ENCODE measurements at regions of chr2 and their contacts with region 1.

Region 1: GRCh38 chr2:238060542-238061314 is at the start of gene SCLY:
- DNase-seq: peak; percentile 99
- ATAC-seq: peak; percentile 97
- H3K4me3 Mint-ChIP-seq: peak within 1 kb of the TSS; percentile 80
- H3K27ac Mint-ChIP-seq: peak within 1 kb of the TSS; percentile 96
- H3K4me1 Mint-ChIP-seq: peaks cover 49% of the 10 kb centered on the region
- H3K27me3 Mint-ChIP-seq: peaks cover 10% of the 10 kb centered on the region
- total RNA-seq, gene SCLY: 59.2 to 60.5 TPM

Region 2: GRCh38 chr2:237441605-237442274 is 619.0 kb before region 1 on chr2:
- CTCF ChIA-PET with region 1: no interaction called
- POLR2A ChIA-PET with region 1: no interaction called
- intact Hi-C with region 1: loop called in 1 of 2 experiments (anchors 2 kb)
- DNase-seq: peak; percentile 69
- ATAC-seq: peak; percentile 71
- H3K4me3 Mint-ChIP-seq: peak overlapping the region; percentile 50
- H3K27ac Mint-ChIP-seq: peak overlapping the region; percentile 96
- H3K4me1 Mint-ChIP-seq: peaks cover 82% of the 10 kb centered on the region
- H3K27me3 Mint-ChIP-seq: no peaks in the 10 kb centered on the region

Region 3: GRCh38 chr2:238024986-238025385 is 35.7 kb before region 1 on chr2:
- CTCF ChIA-PET with region 1: interaction called, 3 read pairs
- POLR2A ChIA-PET with region 1: no interaction called
- intact Hi-C with region 1: loop called in 1 of 2 experiments (anchors 2 kb)
- DNase-seq: peak; percentile 77
- ATAC-seq: peak; percentile 100
- H3K4me3 Mint-ChIP-seq: peak overlapping the region; percentile 32
- H3K27ac Mint-ChIP-seq: peak overlapping the region; percentile 84
- H3K4me1 Mint-ChIP-seq: peaks cover 20% of the 10 kb centered on the region
- H3K27me3 Mint-ChIP-seq: no peaks in the 10 kb centered on the region

Region 4: DNA sequence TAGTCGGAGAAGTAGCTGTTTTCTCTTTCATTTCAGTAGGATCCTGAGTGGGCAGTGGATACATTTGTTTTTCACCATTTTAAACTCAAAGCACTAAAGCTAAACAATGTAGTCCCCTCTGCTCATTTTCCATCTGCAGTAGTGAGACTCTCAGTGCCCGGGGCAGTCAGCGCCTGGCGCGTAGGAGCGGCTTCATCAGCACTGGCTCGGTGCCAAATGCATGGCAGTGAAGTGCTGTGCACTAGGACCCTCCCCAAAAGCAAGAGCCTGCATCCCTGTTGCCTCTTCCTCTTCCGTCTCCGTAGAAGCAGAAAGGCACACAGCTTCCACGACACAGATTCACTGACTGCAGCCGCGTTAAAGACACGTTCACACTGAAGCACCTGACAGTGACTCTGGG is 20.4 kb after region 1 on chr2:
- CTCF ChIA-PET with region 1: no interaction called
- POLR2A ChIA-PET with region 1: no interaction called
- intact Hi-C with region 1: no loop called
- DNase-seq: no peak
- ATAC-seq: no peak
- H3K4me3 Mint-ChIP-seq: no peak overlapping the region
- H3K27ac Mint-ChIP-seq: no peak overlapping the region
- H3K4me1 Mint-ChIP-seq: no peaks in the 10 kb centered on the region
- H3K27me3 Mint-ChIP-seq: no peaks in the 10 kb centered on the region

Region 5: GRCh38 chr2:238097998-238098871 is 37.5 kb after region 1 on chr2:
- CTCF ChIA-PET with region 1: no interaction called
- POLR2A ChIA-PET with region 1: no interaction called
- intact Hi-C with region 1: no loop called
- DNase-seq: no peak
- ATAC-seq: peak; percentile 24
- H3K4me3 Mint-ChIP-seq: no peak overlapping the region
- H3K27ac Mint-ChIP-seq: no peak overlapping the region
- H3K4me1 Mint-ChIP-seq: no peaks in the 10 kb centered on the region
- H3K27me3 Mint-ChIP-seq: no peaks in the 10 kb centered on the region

Region 6: DNA sequence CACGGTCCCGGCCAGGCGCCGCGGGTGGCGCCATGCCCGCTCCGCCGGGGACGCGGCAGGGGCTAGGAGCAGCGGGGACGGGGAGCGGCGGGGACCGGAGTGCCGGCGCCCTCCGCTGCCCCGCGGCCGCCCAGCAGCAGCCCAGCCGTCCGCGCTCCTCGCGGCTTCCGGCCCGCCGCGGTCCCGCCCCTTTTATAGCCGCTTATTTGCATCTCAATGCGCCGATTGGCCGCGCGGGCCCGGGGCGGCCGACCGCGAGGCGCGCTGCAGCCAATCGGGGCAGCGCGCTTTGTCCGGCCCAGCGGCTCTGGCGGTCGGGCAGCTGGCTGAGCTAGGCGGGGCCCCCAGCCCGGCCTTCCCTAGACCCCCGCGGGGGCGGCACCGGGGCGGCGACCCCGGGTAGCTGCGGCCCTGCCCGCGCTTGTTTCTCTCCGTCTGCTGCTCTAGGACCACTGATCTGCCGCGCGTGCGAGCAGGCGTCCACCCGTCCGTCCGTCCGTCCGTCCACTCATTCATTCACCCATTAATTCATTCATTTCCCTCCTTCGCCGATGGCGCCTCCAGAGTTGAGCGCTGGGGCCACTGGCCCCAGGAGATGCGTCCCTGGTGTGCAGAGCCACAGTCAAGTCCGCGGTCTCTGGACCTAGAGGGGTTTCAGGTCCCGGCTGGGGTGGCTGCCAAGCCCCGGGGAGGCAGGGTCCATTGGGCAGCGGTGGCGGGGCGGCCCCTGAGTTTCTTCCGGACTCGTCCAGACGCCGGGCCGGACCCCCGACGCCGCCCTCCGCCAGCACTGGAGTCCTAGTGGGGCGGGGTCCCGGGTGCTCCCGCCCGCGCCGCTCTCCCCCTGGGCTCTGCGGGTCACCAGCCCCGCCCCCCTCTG is 179.4 kb after region 1 on chr2 and contains the start of gene HES6:
- CTCF ChIA-PET with region 1: no interaction called
- POLR2A ChIA-PET with region 1: no interaction called
- intact Hi-C with region 1: loop called in 1 of 2 experiments (anchors 2 kb)
- DNase-seq: peak; percentile 87
- ATAC-seq: peak; percentile 86
- H3K4me3 Mint-ChIP-seq: peak within 1 kb of the TSS; percentile 77
- H3K27ac Mint-ChIP-seq: no peak within 1 kb of the TSS
- H3K4me1 Mint-ChIP-seq: peaks cover 5% of the 10 kb centered on the region
- H3K27me3 Mint-ChIP-seq: peaks cover 21% of the 10 kb centered on the region
- total RNA-seq, gene HES6: 1.8 to 4.0 TPM

Region 7: DNA sequence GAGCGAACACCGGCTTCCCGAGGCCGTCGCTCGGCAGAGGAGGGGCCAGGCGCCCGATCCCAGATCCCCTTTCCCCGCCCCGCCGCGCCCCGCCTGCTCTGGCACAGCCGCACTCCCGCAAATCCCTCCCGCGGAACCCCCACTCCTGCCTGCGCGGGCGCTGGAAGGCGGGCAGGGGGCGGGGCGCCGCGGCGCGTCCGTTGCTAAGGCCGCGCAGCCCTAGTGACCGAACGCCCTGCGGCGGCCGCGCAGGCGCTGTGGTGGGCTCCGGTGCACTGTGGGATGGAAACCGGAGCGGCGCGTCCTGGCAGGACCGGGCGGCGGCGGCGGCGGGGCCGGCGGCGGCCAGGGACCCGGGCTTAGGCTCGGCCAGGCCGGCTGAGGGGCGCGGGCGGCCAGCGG is 259.5 kb after region 1 on chr2 and contains the start of gene TRAF3IP1:
- CTCF ChIA-PET with region 1: no interaction called
- POLR2A ChIA-PET with region 1: no interaction called
- intact Hi-C with region 1: loop called in 1 of 2 experiments (anchors 1 kb)
- DNase-seq: peak; percentile 91
- ATAC-seq: peak; percentile 96
- H3K4me3 Mint-ChIP-seq: peak within 1 kb of the TSS; percentile 70
- H3K27ac Mint-ChIP-seq: no peak within 1 kb of the TSS
- H3K4me1 Mint-ChIP-seq: peaks cover 23% of the 10 kb centered on the region
- H3K27me3 Mint-ChIP-seq: peaks cover 3% of the 10 kb centered on the region
- total RNA-seq, gene TRAF3IP1: 8.5 to 9.8 TPM